ENCODE measurements at regions of chr9 and their contacts with region 1.

Region 1: GRCh38 chr9:96686548-96687335 is 31.6 kb upstream of the PRXL2C start:
- DNase-seq: peak; percentile 90
- H3K4me3 ChIP-seq: peak overlapping the region; percentile 38 to 60 (median 54)
- H3K27ac ChIP-seq: peak overlapping the region; percentile 68 to 84 (median 76)
- H3K4me1 ChIP-seq: peaks cover 0 to 6% (median 3%) of the 10 kb centered on the region in 4 donors
- H3K27me3 ChIP-seq: no peaks in the 10 kb centered on the region
- CTCF ChIP-seq: peak; percentile 18 to 58 (median 42)
- EP300 ChIP-seq: no peak
- POLR2A ChIP-seq: no peak

Region 2: DNA sequence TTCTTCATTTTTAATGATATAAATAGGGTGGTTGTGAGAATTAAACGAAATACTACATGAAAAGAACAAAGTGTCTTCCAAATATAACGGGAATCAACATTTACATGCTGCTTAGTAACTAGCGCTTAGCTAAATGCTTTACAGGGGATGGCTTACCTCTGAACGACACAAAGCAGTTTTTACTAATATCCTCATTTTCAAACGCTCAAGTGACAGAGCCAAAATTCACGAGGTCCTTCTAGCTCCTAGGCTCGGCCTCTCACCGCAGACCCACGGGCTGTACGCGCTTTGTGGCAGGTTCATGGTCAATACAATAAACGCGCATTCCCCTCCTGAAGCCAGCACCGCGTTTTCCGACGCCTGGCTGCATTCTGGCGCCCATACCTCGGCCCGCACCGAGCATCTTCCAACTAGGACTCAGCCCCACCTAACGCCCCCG is 90.7 kb after region 1 on chr9:
- intact Hi-C with region 1: loop called (anchors 5 kb)
- DNase-seq: no peak
- H3K4me3 ChIP-seq: peak overlapping the region; percentile 61 to 91 (median 74)
- H3K27ac ChIP-seq: peak overlapping the region; percentile 81 to 84 (median 84)
- H3K4me1 ChIP-seq: peaks cover 0 to 20% (median 10%) of the 10 kb centered on the region in 4 donors
- H3K27me3 ChIP-seq: no peaks in the 10 kb centered on the region
- CTCF ChIP-seq: no peak
- EP300 ChIP-seq: no peak
- POLR2A ChIP-seq: no peak

Measured in sigmoid colon (tissue), 7 donors.